Activated T-helper 2 cell treated with anti-CD3 and anti-CD28 coated beads, Interferon-gamma antibody, Interleukin-2, Interleukin-4, amounts not matched to agents 10 μg/mL and 5 μg/mL and 100 μg/mL, durations not matched to agents 14 hours and 24 hours and 36 hours (primary cell): ENCODE measurements at regions of chrX and their contacts with region 1.

Region 1: DNA sequence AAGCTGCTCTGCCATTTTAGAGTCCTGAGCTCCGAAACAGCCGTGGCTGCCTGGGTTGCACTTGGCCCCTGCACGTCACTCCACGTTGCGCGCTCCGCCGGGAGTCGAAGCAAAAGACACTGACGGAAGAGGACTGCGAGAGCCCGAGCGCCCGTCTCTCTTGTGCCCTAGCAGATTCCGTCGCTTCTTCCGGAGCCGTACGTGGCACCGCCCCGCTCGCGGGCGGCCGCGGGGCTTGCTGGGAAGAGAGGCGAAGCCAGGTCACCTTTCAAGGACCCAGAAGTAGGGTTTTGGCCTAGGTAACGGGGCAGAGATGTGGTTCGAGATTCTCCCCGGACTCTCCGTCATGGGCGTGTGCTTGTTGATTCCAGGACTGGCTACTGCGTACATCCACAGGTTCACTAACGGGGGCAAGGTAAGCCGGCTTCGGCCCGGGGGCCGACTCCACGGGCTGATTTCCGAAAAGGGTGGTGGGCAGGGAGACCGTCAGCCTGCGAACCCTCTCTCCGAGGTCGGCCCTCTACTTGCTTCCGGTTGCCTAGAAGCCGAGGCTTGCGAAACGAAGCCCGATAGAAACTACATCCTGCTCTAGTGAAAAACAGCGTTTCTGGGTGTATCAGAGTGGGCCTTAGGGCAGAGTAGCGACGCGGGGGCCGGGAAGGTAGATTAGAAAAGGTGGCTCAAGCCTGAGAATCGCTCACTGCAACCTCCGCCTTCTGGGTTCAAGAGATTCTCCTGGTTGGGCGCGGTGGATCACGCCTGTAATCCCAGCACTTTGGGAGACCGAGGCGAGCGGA is at the starts of genes NDUFA1 and RNF113A:
- DNase-seq: peak; percentile 84
- H3K4me3 Mint-ChIP-seq: peak within 1 kb of the TSS; percentile 96
- H3K27ac Mint-ChIP-seq: peak within 1 kb of the TSS; percentile 99
- H3K4me1 Mint-ChIP-seq: peaks cover 5% of the 10 kb centered on the region
- H3K27me3 Mint-ChIP-seq: no peaks in the 10 kb centered on the region
- total RNA-seq, gene NDUFA1: 82.6 and 84.4 TPM in 2 replicates
- total RNA-seq, gene RNF113A: 24.0 and 26.8 TPM in 2 replicates

Region 2: GRCh38 chrX:119685225-119686066 is 186.4 kb before region 1 on chrX:
- intact Hi-C with region 1: loop called (anchors 5 kb)
- DNase-seq: peak; percentile 50
- H3K4me3 Mint-ChIP-seq: peak overlapping the region; percentile 90
- H3K27ac Mint-ChIP-seq: peak overlapping the region; percentile 100
- H3K4me1 Mint-ChIP-seq: peaks cover 52% of the 10 kb centered on the region
- H3K27me3 Mint-ChIP-seq: no peaks in the 10 kb centered on the region

Region 3: DNA sequence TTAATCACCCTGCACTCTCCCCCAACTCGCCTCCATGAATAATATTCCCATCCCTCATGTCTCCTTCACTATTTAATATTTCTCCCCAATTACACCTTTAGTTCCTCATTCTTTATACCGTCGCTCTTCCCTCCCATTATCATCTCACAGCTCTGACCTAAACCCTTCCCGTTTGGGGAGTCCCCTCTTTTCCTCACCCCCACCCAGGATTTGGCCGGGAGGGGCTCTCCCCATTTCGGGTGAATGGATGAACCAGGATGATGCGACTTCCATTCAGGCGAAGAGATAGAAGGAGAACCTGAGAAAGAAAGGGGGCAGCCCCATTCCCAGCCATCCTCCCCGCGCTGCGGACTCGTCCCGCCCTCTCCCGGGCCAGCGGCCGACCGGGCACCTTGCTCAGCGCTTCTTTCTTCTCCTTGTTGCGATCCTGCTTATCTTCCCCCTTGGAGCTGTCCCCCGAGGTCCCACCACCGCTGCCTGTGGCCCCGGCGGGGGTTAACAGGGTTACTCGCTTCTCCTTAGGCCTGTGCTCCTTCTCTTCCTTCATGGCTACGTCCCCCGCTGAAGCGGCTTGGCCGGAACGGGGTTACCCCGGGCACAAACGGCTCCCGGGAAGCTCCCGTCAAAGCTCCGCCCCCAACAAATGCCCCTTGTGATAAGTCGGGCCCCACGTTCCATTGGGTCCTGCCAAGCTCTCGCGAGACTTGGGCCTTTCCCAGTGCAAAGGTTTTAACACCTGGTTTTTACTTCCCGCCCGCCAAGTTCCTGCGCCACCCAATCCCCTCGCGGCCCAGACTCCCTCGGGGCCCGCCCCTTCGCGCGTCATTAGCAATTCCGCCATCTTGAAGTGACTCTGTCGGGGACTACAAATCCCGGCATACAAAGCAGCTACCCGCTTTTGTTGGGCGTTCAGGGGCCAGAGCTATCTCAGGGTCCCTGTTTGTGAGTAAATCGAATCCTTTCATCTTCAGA is 19.1 kb before region 1 on chrX and contains the start of gene UPF3B:
- intact Hi-C with region 1: loop called (anchors 1 kb)
- DNase-seq: peak; percentile 92
- H3K4me3 Mint-ChIP-seq: peak within 1 kb of the TSS; percentile 96
- H3K27ac Mint-ChIP-seq: peak within 1 kb of the TSS; percentile 95
- H3K4me1 Mint-ChIP-seq: peaks cover 4% of the 10 kb centered on the region
- H3K27me3 Mint-ChIP-seq: no peaks in the 10 kb centered on the region
- total RNA-seq, gene UPF3B: 13.9 TPM in 2 replicates

Region 4: DNA sequence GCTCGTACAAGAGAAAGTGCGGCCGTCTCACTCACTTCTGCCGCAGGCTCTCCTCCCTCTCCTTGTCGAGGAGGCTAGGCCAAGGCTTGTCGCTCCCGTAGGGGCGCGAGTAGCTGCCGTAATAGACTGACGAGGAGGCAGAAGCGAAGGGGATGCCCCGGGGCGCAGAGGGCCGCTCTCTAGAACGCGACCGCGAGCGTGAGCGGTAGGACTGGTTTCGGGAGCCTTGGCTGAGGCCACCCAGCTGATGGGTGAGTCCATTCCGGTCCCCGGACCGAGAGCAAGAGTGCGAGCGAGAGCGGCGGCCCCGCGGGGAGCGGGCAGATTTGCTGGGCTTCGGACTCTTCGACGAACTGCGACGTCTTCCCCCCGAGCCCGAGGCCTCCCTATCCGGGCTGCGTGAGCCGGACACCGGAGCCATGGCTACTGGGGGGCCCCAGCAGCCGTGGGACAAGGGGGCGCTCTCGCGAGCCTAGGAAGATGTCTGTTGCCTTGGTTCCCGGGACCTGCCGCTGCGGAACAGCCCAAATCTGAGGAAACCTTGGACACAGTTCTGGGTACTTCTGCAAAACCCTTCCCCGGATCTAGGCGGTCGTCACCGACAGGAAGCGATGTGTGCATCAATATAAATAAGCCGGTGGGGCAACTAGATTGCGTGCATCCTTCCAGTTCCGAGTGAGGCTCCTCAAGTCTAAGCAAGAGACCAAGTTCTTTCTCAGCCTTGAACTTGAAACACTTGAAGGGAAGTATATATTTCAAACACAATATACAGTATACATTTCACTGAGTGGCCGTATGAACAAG is 71.6 kb after region 1 on chrX and contains the start of gene NKAP:
- intact Hi-C with region 1: loop called (anchors 1 kb)
- DNase-seq: peak; percentile 79
- H3K4me3 Mint-ChIP-seq: peak within 1 kb of the TSS; percentile 92
- H3K27ac Mint-ChIP-seq: peak within 1 kb of the TSS; percentile 91
- H3K4me1 Mint-ChIP-seq: peaks cover 13% of the 10 kb centered on the region
- H3K27me3 Mint-ChIP-seq: peaks cover under 1% of the 10 kb centered on the region
- total RNA-seq, gene NKAP: 9.8 and 10.4 TPM in 2 replicates

Region 5: DNA sequence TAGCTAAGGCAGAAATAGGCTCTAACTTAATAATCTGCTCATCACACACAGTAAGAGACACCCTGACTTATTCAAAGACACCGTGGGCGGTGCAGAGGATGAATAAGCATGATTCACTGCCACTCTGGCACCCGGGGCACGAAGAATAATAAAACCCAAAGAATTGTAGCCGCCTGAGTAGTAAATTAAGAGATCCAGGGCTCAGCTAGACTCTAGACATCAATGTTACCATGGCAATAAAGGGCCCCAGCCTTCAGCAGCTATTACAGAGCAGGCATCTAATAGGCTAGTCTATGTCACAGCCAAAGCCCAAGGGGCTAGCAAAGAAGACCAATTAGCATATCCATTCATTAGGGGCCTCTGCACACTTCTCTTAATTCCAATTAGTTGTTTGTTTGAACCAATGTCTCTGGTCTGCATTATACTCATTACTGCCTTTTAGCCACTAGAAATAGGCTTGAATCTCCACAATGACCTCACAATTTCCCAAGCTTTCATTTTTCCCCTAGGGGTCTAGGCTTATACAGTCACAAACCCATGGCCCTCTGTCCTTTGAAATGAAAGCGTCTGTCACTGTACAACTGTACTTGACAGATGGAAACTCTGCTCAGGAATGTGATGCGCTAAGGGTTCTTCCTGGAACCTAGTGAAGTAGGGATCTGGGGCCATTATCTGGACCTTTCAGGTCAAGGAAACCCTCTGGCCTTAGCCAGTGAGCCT is 487.1 kb after region 1 on chrX:
- intact Hi-C with region 1: no loop called
- DNase-seq: no peak
- H3K4me3 Mint-ChIP-seq: no peak overlapping the region
- H3K27ac Mint-ChIP-seq: no peak overlapping the region
- H3K4me1 Mint-ChIP-seq: peaks cover 7% of the 10 kb centered on the region
- H3K27me3 Mint-ChIP-seq: no peaks in the 10 kb centered on the region